ENCODE measurements at regions of chr2 and their contacts with region 1.

Region 1: GRCh38 chr2:136384531-136385303 is 266.8 kb upstream of the CXCR4 start:
- DNase-seq: peak; percentile 71
- ATAC-seq: peak; percentile 64
- H3K4me3 Mint-ChIP-seq: no peak overlapping the region
- H3K27ac Mint-ChIP-seq: peak overlapping the region; percentile 4
- H3K4me1 Mint-ChIP-seq: peaks cover 48% of the 10 kb centered on the region
- H3K27me3 Mint-ChIP-seq: peaks cover 3% of the 10 kb centered on the region

Region 2: DNA sequence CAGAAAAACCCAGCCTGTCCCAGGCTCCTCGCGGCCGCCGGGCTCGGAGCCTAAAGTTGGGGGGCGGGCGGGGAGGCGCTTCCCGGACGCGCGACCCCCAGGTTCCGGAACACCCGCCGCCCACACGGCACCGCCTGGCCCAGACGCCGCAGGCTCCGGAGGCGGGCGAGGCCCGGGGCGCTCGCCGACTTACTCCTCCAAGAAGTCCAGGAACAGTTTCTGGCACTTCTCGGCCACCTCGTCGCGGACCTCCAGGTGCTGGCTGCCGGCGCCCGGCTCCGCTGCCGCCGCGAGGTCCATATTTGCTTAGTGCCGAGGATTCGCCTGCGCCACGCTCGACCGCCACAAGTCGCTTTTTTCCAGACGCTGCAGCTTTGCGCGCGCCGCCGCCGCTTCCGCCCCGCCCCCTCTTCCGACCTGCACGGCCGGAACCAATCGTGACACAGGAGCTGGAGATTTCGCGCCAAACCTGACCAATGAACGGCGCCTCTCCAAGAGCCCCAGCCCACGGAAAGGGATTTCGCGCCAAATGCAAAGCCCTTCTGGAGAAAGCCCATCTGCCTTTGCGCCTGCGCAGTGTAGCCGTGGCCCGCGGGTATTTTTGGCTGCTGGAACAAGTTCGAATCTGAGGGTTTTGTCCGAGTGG is 508.5 kb before region 1 on chr2 and contains the start of gene MCM6:
- CTCF ChIA-PET with region 1: interaction called, 21 read pairs
- DNase-seq: peak; percentile 100
- ATAC-seq: peak; percentile 92
- H3K4me3 Mint-ChIP-seq: peak within 1 kb of the TSS; percentile 85
- H3K27ac Mint-ChIP-seq: peak within 1 kb of the TSS; percentile 97
- H3K4me1 Mint-ChIP-seq: peaks cover 41% of the 10 kb centered on the region
- H3K27me3 Mint-ChIP-seq: no peaks in the 10 kb centered on the region
- total RNA-seq, gene MCM6: 130 to 159 TPM

Region 3: DNA sequence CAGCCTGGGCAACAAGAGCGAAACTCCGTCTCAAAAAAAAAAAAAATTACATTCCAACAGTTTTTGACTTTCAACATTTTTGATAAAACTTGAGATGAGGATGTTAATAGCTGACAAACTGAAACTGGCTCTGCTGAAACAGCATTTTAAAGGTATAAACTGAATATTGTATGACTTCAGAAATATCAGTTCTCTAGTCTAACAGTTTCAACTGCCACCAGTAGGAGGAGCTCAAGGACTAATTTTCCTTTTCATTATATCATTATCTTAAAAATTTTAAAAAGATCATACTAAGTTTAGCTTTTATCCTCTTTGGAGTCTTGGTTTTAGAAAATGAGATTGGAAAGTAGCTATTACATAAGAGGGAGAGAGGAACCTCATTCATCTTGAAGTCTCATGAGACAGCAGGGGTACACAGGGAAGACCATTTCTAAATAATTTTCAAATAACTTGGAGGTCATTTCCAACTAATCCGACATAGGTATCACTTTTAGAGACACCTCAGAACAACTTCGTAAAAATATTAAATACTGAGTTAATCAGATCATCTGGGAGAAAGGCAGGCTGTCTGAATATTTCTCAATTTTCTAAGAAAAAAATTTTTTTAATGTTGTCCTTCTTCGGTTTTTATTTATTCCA is 470.9 kb before region 1 on chr2:
- CTCF ChIA-PET with region 1: interaction called, 109 read pairs
- DNase-seq: peak; percentile 47
- ATAC-seq: peak; percentile 45
- H3K4me3 Mint-ChIP-seq: no peak overlapping the region
- H3K27ac Mint-ChIP-seq: no peak overlapping the region
- H3K4me1 Mint-ChIP-seq: peaks cover 15% of the 10 kb centered on the region
- H3K27me3 Mint-ChIP-seq: no peaks in the 10 kb centered on the region

Region 4: GRCh38 chr2:136057023-136057801 is 327.5 kb before region 1 on chr2:
- CTCF ChIA-PET with region 1: interaction called, 10 read pairs
- DNase-seq: peak; percentile 51
- ATAC-seq: peak; percentile 45
- H3K4me3 Mint-ChIP-seq: peak overlapping the region; percentile 40
- H3K27ac Mint-ChIP-seq: peak overlapping the region; percentile 94
- H3K4me1 Mint-ChIP-seq: peaks cover 61% of the 10 kb centered on the region
- H3K27me3 Mint-ChIP-seq: no peaks in the 10 kb centered on the region

Region 5: DNA sequence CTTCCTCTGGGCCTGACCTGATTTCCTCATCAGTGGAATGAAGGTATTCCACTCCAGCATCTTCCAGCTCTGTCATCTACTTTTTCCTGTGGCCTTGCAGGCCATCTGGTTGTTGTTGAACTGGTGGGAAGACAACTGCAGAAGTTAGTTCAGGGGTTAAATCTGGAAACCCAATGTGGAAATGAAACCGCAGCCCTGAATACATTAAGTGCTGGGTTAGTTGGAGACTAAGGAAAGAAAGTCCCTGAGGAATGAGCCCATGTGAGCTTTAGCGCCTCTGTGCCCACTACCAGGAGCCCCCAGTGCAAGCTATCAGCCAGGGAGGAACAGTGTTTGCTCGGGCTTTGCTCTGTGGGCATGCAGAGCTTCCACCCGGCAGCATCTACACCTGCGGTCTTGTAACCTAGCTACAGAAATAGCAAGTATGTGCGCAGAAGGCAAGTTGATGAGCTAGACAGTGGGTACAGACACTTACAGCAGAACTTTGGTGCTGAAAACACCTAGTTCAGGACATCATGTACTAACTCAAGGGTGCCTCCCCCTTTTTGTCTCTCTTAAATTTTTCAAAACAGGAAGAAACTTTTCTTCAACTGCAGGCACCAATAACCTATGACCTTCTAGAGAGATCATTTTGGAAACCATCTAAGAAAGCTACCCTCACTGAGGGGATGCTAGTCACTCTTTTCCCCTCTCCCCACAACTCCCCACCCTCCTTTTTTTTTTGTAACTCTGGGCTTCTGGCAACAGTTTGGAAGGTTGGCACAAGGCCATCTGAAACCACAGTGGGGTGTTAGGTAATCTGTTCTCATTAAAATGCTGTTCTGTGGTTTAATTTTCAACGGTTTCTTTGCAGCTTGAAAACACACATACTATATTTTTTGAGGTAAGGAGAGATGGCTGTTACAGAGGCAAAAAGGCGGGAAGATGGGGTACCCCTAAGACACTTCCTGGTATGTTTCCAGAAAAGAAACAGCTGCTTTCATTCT is 248.5 kb before region 1 on chr2:
- CTCF ChIA-PET with region 1: interaction called, 12 read pairs
- DNase-seq: peak; percentile 83
- ATAC-seq: peak; percentile 77
- H3K4me3 Mint-ChIP-seq: peak overlapping the region; percentile 2
- H3K27ac Mint-ChIP-seq: peak overlapping the region; percentile 84
- H3K4me1 Mint-ChIP-seq: peaks cover 84% of the 10 kb centered on the region
- H3K27me3 Mint-ChIP-seq: peaks cover 38% of the 10 kb centered on the region

Region 6: DNA sequence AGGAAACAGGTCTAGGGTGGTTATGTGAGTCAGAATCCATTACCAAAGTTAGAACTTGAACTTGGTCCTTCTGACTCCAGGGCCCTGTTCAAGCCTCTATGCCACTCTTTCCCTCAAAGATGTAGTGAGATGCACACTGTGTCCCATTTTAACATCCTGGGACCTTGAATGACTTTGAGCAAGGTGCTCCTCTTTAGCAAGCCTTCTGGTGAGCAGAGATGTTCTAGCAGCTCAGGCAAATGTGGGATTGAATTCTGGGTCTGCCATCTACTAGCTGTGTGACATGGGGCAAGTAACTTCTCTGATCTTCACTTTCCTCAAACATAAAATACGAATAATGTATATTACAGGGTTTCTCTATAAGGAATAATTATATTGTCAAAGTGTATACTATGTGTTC is 27.2 kb after region 1 on chr2:
- CTCF ChIA-PET with region 1: no interaction called
- DNase-seq: no peak
- ATAC-seq: no peak
- H3K4me3 Mint-ChIP-seq: no peak overlapping the region
- H3K27ac Mint-ChIP-seq: no peak overlapping the region
- H3K4me1 Mint-ChIP-seq: peaks cover 6% of the 10 kb centered on the region
- H3K27me3 Mint-ChIP-seq: peaks cover 49% of the 10 kb centered on the region

Region 7: GRCh38 chr2:136497709-136498108 is 113.0 kb after region 1 on chr2:
- CTCF ChIA-PET with region 1: no interaction called
- DNase-seq: no peak
- ATAC-seq: no peak
- H3K4me3 Mint-ChIP-seq: no peak overlapping the region
- H3K27ac Mint-ChIP-seq: no peak overlapping the region
- H3K4me1 Mint-ChIP-seq: no peaks in the 10 kb centered on the region
- H3K27me3 Mint-ChIP-seq: no peaks in the 10 kb centered on the region

Measured in activated CD8-positive, alpha-beta memory T cell treated with anti-CD3 and anti-CD28 coated beads, Interleukin-2, amount 10 ng/mL, durations not matched to agents 7 days and 5 days (primary cell).